ENCODE measurements at regions of chr20 and their contacts with region 1.

Region 1: DNA sequence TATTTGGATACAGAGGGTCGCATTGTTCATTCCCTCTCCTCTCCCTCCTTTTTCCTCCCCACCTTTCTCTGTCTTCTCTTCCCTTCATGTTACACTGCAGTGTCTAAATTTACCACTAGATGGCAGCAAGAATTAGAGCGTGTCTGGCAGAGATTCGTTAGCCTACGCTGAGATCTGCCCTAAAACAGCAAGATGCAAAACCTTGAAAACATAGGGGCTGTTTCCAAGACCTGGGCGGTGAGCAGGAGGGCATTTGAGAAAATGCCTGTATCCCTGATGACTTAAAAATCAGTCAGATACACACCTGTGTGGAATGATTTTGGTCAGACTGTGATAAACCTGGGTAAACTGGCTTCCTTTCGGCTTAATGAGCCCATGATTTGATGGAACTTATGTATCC is 101.5 kb upstream of the ISM1 start:
- DNase-seq: peak; percentile 77
- H3K4me3 Mint-ChIP-seq: no peak overlapping the region
- H3K27ac Mint-ChIP-seq: no peak overlapping the region
- H3K4me1 Mint-ChIP-seq: peaks cover 6% of the 10 kb centered on the region
- H3K27me3 Mint-ChIP-seq: no peaks in the 10 kb centered on the region
- CTCF ChIP-seq: peak; percentile 69

Region 2: GRCh38 chr20:13054011-13054410 is 65.6 kb before region 1 on chr20:
- CTCF ChIA-PET with region 1: no interaction called
- POLR2A ChIA-PET with region 1: no interaction called
- intact Hi-C with region 1: no loop called
- DNase-seq: no peak
- H3K4me3 Mint-ChIP-seq: no peak overlapping the region
- H3K27ac Mint-ChIP-seq: no peak overlapping the region
- H3K4me1 Mint-ChIP-seq: no peaks in the 10 kb centered on the region
- H3K27me3 Mint-ChIP-seq: no peaks in the 10 kb centered on the region
- CTCF ChIP-seq: no peak

Region 3: GRCh38 chr20:13142143-13142542 is 22.6 kb after region 1 on chr20:
- CTCF ChIA-PET with region 1: interaction called, 14 read pairs
- POLR2A ChIA-PET with region 1: no interaction called
- intact Hi-C with region 1: no loop called
- DNase-seq: no peak
- H3K4me3 Mint-ChIP-seq: no peak overlapping the region
- H3K27ac Mint-ChIP-seq: no peak overlapping the region
- H3K4me1 Mint-ChIP-seq: no peaks in the 10 kb centered on the region
- H3K27me3 Mint-ChIP-seq: no peaks in the 10 kb centered on the region
- CTCF ChIP-seq: no peak

Region 4: DNA sequence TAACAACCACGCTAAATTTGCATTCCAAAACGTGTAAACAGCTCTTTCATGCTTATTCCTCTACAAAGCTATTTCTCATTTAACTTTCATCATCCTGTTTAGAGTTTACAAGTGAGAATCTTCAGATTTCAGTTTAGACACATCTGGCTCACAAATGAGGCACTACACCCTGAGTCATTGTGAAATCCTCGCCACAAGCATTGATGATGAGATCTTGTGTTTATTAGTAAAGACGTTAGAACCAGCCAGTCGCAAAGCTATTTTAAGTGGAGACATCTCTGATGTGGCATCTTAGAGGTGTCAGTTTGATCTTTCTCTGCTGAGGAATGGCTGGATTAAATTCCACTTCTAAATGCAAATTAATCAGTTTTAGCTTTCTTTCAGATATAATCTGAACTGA is 93.2 kb after region 1 on chr20:
- CTCF ChIA-PET with region 1: interaction called, 8 read pairs
- POLR2A ChIA-PET with region 1: no interaction called
- intact Hi-C with region 1: loop called (anchors 10 kb)
- DNase-seq: peak; percentile 58
- H3K4me3 Mint-ChIP-seq: no peak overlapping the region
- H3K27ac Mint-ChIP-seq: peak overlapping the region; percentile 53
- H3K4me1 Mint-ChIP-seq: peaks cover 17% of the 10 kb centered on the region
- H3K27me3 Mint-ChIP-seq: no peaks in the 10 kb centered on the region
- CTCF ChIP-seq: no peak

Region 5: GRCh38 chr20:13458860-13459451 is 339.4 kb after region 1 on chr20:
- CTCF ChIA-PET with region 1: interaction called, 5 read pairs
- POLR2A ChIA-PET with region 1: no interaction called
- intact Hi-C with region 1: loop called (anchors 10 kb)
- DNase-seq: peak; percentile 56
- H3K4me3 Mint-ChIP-seq: no peak overlapping the region
- H3K27ac Mint-ChIP-seq: no peak overlapping the region
- H3K4me1 Mint-ChIP-seq: peaks cover 8% of the 10 kb centered on the region
- H3K27me3 Mint-ChIP-seq: no peaks in the 10 kb centered on the region
- CTCF ChIP-seq: peak; percentile 81

Region 6: GRCh38 chr20:13771853-13772453 is 652.4 kb after region 1 on chr20:
- CTCF ChIA-PET with region 1: interaction called, 20 read pairs
- POLR2A ChIA-PET with region 1: interaction called, 3 read pairs
- intact Hi-C with region 1: loop called (anchors 1 kb)
- DNase-seq: no peak
- H3K4me3 Mint-ChIP-seq: no peak overlapping the region
- H3K27ac Mint-ChIP-seq: peak overlapping the region; percentile 87
- H3K4me1 Mint-ChIP-seq: peaks cover 15% of the 10 kb centered on the region
- H3K27me3 Mint-ChIP-seq: no peaks in the 10 kb centered on the region
- CTCF ChIP-seq: peak; percentile 42

Region 7: DNA sequence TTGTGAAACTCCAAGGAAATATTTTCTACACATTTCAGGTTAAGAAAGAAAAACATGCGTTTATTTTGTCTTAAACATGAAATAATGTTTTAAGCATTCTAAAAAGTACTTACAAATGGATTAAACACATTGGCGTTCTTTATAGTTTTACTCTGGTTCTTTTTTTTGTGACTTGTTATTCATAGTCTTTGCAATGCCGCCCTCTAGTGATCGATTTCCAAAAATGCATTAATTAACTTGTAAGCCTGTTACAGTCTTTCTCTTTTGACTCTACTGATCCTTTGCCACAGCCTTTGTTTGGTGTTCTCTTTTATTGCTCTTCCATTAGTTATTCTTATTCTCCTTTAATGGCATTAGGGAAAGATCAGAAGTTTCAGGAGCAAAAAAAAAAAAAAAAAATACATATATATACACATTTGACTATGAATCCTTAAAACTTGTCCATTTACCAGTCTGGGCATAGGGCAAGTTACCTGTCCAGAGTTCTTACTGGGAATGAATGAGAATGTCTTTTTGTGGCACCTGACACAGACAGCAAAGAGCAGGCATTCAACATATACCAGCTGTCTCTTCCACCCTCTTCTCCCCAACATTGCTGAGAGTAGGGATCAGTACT is 935.7 kb after region 1 on chr20:
- CTCF ChIA-PET with region 1: no interaction called
- POLR2A ChIA-PET with region 1: no interaction called
- intact Hi-C with region 1: loop called (anchors 2 kb)
- DNase-seq: peak; percentile 79
- H3K4me3 Mint-ChIP-seq: no peak overlapping the region
- H3K27ac Mint-ChIP-seq: no peak overlapping the region
- H3K4me1 Mint-ChIP-seq: no peaks in the 10 kb centered on the region
- H3K27me3 Mint-ChIP-seq: no peaks in the 10 kb centered on the region
- CTCF ChIP-seq: peak; percentile 50